Activated T-helper 1 cell treated with anti-CD3 and anti-CD28 coated beads, Interleukin-12 subunit alpha, Interleukin-12 subunit beta, Interleukin-2, Interleukin-4 antibody, amounts not matched to agents 30 ng/mL and 10 ng/mL and 1 ng/mL, durations not matched to agents 14 hours and 24 hours and 36 hours (primary cell): ENCODE measurements at regions of chr18 and their contacts with region 1.

Region 1: DNA sequence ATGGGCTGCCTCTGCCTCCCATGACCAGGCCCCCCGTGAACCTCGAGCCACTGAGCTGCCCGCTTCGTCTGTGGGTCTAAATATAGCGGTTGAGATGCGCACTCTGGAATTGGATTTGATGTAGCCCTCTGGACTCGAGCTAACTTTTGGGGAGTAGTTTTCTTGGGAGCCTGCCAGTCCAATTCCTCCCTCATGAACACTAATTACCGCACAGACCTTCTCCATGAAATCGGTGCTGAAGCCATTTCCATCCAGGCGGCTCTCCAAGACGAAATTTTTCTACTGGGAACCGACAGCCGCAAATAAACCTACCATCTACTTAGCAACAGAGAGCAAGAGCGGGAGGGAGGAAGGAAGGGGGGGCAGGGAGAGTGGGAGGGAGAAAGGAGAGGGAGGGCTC is 63.6 kb downstream of the CELF4 start:
- DNase-seq: no peak
- H3K4me3 Mint-ChIP-seq: no peak overlapping the region
- H3K27ac Mint-ChIP-seq: no peak overlapping the region
- H3K4me1 Mint-ChIP-seq: no peaks in the 10 kb centered on the region
- H3K27me3 Mint-ChIP-seq: no peaks in the 10 kb centered on the region

Region 2: GRCh38 chr18:37294951-37295350 is 207.1 kb before region 1 on chr18:
- intact Hi-C with region 1: no loop called
- DNase-seq: no peak
- H3K4me3 Mint-ChIP-seq: no peak overlapping the region
- H3K27ac Mint-ChIP-seq: no peak overlapping the region
- H3K4me1 Mint-ChIP-seq: no peaks in the 10 kb centered on the region
- H3K27me3 Mint-ChIP-seq: peaks cover 1% of the 10 kb centered on the region

Region 3: DNA sequence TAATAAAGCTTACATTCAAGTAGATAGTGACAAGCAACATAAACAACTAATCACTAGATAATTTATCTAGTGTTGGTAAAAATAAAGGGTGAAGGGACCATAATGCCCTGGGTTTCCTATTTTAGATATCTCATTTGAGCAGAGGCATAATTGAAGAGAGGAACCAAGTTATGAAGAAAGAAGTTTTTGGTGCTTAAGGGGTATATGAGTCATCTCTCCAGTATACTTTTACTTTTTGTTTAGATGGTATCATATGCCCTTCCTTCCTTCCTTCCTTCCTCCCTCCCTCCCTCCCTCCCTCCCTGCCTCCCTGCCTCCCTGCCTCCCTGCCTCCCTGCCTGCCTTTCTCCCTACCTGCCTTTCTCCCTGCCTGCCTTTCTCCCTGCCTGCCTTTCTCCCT is 1117.1 kb after region 1 on chr18:
- intact Hi-C with region 1: loop called (anchors 10 kb)
- DNase-seq: no peak
- H3K4me3 Mint-ChIP-seq: no peak overlapping the region
- H3K27ac Mint-ChIP-seq: no peak overlapping the region
- H3K4me1 Mint-ChIP-seq: no peaks in the 10 kb centered on the region
- H3K27me3 Mint-ChIP-seq: no peaks in the 10 kb centered on the region